Keratinocyte (primary cell): ENCODE measurements at regions of chr7 and their contacts with region 1.

Region 1: DNA sequence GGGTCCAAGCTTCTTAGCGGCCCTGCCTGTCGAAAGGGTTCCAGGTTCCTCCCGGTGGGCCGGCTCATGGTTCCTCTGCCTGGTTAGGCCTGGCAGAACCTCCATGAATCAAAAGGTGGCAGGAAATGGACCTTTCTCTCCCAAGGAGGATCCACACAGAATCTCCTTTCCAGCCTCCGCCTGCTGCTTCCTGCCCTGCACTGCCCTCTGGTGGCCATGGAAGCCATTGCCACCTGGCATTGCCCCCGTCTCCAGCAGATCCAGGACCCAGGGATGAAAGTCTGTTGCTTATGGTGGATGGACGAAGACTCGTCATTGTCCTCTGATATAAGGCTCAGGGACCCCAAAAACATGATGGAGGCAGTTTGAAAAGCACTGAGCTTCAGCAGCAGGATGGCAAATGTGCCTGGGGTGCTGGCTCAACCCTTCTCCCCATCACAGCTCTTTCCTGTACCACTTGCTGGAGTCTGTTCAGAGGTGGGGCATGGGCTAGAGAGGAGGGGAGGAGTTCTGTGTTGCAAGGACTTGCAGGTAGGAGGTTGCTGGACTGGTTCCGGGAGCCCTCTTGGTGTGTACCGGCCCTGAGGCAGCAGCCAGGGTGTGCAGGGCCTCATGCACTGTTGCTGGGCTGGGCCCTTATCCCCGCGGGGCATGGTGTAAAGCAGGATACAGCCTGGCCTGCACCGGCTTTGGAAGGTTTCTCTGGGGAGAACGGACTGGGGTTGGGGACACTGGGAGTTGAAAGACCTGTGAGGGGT is 11.3 kb upstream of the INMT start:
- DNase-seq: no peak
- H3K4me3 ChIP-seq: no peak overlapping the region
- H3K27ac ChIP-seq: no peak overlapping the region
- H3K4me1 ChIP-seq: no peaks in the 10 kb centered on the region
- H3K27me3 ChIP-seq: peaks cover 12% of the 10 kb centered on the region
- CTCF ChIP-seq: peak; percentile 98 to 99 (median 99)

Region 2: GRCh38 chr7:30184791-30185487 is 555.7 kb before region 1 on chr7:
- dilution Hi-C with region 1: no loop called
- DNase-seq: no peak
- H3K4me3 ChIP-seq: no peak overlapping the region
- H3K27ac ChIP-seq: no peak overlapping the region
- H3K4me1 ChIP-seq: peaks cover 8% of the 10 kb centered on the region
- H3K27me3 ChIP-seq: no peaks in the 10 kb centered on the region
- CTCF ChIP-seq: no peak

Region 3: DNA sequence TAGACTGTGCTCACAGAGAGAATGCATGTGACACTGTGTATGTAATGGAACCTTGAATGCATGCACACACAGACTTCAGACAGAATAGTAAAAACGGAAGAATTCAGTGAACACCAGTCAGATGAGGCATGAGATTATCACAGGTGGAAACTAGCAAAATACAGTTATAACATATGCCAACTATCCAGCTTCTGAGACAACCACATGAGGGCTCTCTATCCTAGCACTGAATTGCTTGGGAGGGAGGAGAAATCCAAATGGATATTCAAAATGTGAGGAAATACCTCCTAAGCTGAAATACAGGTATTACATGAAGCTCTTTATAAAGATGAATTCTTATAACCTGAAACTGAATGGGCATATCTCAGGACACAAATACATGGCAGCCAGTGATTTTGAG is 115.3 kb before region 1 on chr7:
- dilution Hi-C with region 1: loop called (anchors 25 kb)
- DNase-seq: no peak
- H3K4me3 ChIP-seq: no peak overlapping the region
- H3K27ac ChIP-seq: no peak overlapping the region
- H3K4me1 ChIP-seq: no peaks in the 10 kb centered on the region
- H3K27me3 ChIP-seq: no peaks in the 10 kb centered on the region
- CTCF ChIP-seq: no peak